Spleen (tissue), 13 donors: ENCODE measurements at regions of chr14 and their contacts with region 1.

Region 1: GRCh38 chr14:104650057-104650981 is 39.1 kb upstream of the INF2 start:
- DNase-seq: peak; percentile 91
- H3K4me3 ChIP-seq: peak overlapping the region; percentile 35 to 70 (median 40)
- H3K27ac ChIP-seq: peak overlapping the region in 7 of 8 donors; percentile 29 to 77 (median 60)
- H3K4me1 ChIP-seq: peaks cover 6 to 48% (median 22%) of the 10 kb centered on the region in 6 donors
- H3K27me3 ChIP-seq: peaks cover 0 to 9% (median 0%) of the 10 kb centered on the region in 7 donors
- CTCF ChIP-seq: peak; percentile 92 to 99 (median 96)
- POLR2A ChIP-seq: no peak

Region 2: GRCh38 chr14:104708606-104709268 is 58.4 kb after region 1 on chr14:
- intact Hi-C with region 1: loop called (anchors 5 kb)
- DNase-seq: peak; percentile 91
- H3K4me3 ChIP-seq: no peak overlapping the region
- H3K27ac ChIP-seq: no peak overlapping the region
- H3K4me1 ChIP-seq: peaks cover 0 to 33% (median 9%) of the 10 kb centered on the region in 6 donors
- H3K27me3 ChIP-seq: no peaks in the 10 kb centered on the region
- CTCF ChIP-seq: peak; percentile 93 to 99 (median 98)
- POLR2A ChIP-seq: no peak